ENCODE measurements at regions of chr12 and their contacts with region 1.

Region 1: GRCh38 chr12:92987362-92987761 is 58.3 kb upstream of the EEA1 start:
- DNase-seq: peak; percentile 29
- H3K4me3 ChIP-seq: no peak overlapping the region
- CTCF ChIP-seq: no peak

Region 2: DNA sequence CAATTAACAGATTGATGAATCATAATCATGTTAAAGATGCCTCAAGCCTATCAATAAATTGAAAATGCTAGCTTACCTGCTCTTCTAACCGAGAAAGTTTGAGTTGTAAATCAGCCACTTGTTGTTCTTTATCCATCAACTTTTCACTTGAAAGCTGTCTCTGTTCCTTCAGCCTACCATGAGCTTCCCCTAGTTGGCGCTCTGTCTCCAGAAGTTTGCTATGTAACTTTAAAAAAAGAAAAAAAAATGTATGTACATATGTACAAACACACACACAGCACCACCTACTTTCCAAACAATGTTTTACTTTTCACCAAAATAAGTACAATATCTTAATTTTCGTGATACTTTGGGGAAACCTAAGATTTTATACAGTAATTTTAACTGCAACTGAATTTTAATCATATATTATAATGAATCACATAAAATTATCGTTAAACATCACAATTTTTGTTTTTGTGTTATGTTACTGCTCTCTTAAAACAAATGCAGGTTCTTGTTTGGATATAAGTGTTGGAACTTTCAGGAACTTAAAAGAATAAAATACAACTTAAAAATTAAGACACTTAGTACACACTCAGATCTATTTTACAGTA is 159.4 kb before region 1 on chr12:
- CTCF ChIA-PET with region 1: interaction called, 10 read pairs
- POLR2A ChIA-PET with region 1: no interaction called
- DNase-seq: no peak
- H3K4me3 ChIP-seq: no peak overlapping the region
- CTCF ChIP-seq: peak; percentile 59

Region 3: DNA sequence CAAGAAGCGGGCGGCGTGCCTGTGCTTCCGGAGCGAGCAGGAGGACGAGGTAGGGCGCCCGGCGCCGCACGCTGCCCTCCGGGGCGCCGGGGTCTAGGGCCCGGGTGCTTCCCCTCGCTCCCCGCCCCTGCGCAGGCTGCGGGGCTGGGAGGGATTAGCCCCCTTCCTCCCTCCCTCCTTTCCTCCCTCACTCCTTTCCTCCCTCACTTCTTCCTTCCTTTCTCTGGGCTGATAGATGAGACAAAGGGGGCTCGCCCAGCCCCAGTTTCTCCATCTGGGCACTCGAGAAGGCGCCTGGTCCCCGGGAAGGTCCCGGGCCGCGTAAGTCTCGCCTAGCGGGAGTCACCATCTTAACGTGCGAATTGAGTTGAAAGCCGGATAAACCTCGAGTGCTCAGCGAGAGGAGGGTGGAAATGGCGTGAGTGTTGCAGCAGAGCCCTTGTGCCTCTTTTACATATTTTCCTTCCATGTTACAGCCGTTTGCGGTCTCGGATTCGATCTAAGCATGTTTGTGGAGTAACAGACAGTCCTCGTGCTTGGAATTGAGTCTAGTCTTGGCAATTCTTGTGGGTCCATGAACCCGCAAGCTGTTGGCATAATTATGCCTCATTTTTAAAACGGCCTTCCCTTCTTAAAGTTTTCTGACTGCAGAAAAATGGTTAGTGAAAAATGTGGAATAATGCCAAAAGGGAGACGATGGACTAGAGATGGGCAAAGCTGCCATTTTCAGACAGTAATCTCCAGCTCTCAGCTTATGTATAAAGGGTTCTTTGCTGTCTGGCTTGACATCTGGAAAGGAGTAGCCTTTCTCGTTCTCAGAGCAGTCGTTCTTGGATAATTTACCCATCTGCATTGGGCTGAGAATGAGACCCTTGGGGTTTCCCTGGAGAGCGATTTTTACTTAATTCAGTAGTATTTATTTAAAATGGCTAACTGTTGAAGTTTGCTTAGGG is 391.3 kb after region 1 on chr12:
- CTCF ChIA-PET with region 1: interaction called, 32 read pairs
- POLR2A ChIA-PET with region 1: no interaction called
- DNase-seq: peak; percentile 46
- H3K4me3 ChIP-seq: peak overlapping the region; percentile 79
- CTCF ChIP-seq: no peak

Region 4: GRCh38 chr12:93403988-93404803 is 416.8 kb after region 1 on chr12:
- CTCF ChIA-PET with region 1: interaction called, 31 read pairs
- POLR2A ChIA-PET with region 1: no interaction called
- DNase-seq: no peak
- H3K4me3 ChIP-seq: no peak overlapping the region
- CTCF ChIP-seq: no peak